ENCODE measurements at regions of chr1 and their contacts with region 1.

Region 1: GRCh38 chr1:161766102-161766981 is at the start of gene ATF6:
- DNase-seq: peak; percentile 89
- ATAC-seq: peak; percentile 86
- H3K4me3 ChIP-seq: peak within 1 kb of the TSS; percentile 99 to 100
- H3K27ac ChIP-seq: peak within 1 kb of the TSS; percentile 94
- H3K4me1 ChIP-seq: peaks cover 6% of the 10 kb centered on the region; the same call in 1 of the 2 replicates
- H3K27me3 ChIP-seq: no peaks in the 10 kb centered on the region
- CTCF ChIP-seq: no peak
- total RNA-seq, gene ATF6: 16.4 TPM

Region 2: DNA sequence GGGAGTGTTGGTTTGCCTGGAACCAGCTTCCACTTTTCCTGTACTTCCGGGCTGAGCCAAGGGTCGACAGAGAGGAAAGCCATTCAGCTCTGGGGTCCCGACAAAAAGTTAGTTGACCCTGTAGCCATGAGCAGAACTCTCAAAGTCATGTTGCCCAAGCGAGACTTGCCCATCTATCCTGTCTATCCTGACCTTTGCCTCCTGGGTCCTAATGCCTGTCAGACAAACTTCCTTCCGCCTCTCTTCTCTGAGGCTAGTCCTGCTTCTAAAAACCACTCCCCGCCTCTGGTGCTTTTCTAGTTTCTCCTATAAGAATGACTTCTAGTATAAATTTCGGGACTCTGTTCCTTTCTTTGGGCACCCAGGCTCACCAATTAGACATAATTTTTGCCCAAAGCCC is 515.5 kb before region 1 on chr1:
- CTCF ChIA-PET with region 1: no interaction called
- POLR2A ChIA-PET with region 1: no interaction called
- in situ Hi-C with region 1: no loop called
- intact Hi-C with region 1: no loop called
- DNase-seq: no peak
- ATAC-seq: no peak
- H3K4me3 ChIP-seq: no peak overlapping the region
- H3K27ac ChIP-seq: no peak overlapping the region
- H3K4me1 ChIP-seq: no peaks in the 10 kb centered on the region
- H3K27me3 ChIP-seq: no peaks in the 10 kb centered on the region
- CTCF ChIP-seq: no peak

Region 3: DNA sequence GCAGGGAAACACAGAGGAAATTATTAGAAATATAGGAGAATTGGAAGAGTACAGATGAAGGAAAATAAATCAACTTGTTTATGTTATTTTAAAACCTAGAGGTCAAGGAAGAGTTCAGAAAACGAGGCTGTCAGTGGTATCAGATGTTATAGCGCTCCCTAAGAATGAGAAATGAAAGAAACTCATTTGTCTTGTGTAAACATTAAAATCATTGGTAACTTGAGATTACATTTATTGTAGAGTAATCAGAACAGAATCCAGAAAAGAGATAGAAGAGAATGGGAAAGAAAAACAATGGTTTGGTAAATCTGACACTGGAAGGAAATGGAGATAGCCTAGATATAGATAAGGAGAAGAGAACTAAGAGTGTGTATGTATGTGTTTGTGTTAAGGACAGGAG is 106.2 kb after region 1 on chr1:
- CTCF ChIA-PET with region 1: no interaction called
- POLR2A ChIA-PET with region 1: no interaction called
- in situ Hi-C with region 1: no loop called
- intact Hi-C with region 1: no loop called
- DNase-seq: no peak
- ATAC-seq: no peak
- H3K4me3 ChIP-seq: no peak overlapping the region
- H3K27ac ChIP-seq: no peak overlapping the region
- H3K4me1 ChIP-seq: no peaks in the 10 kb centered on the region
- H3K27me3 ChIP-seq: no peaks in the 10 kb centered on the region
- CTCF ChIP-seq: no peak

Region 4: GRCh38 chr1:162391790-162392563 is 625.6 kb after region 1 on chr1:
- CTCF ChIA-PET with region 1: no interaction called
- POLR2A ChIA-PET with region 1: no interaction called
- in situ Hi-C with region 1: no loop called
- intact Hi-C with region 1: loop called (anchors 10 kb)
- DNase-seq: peak; percentile 22
- ATAC-seq: peak; percentile 66
- H3K4me3 ChIP-seq: no peak overlapping the region
- H3K27ac ChIP-seq: peak overlapping the region; percentile 76
- H3K4me1 ChIP-seq: peaks cover 22% of the 10 kb centered on the region
- H3K27me3 ChIP-seq: peaks cover 8% of the 10 kb centered on the region; the same call in 1 of the 2 replicates
- CTCF ChIP-seq: peak; percentile 86

Measured in Panc1 (cell line).